ENCODE measurements at regions of chr11 and their contacts with region 1.

Region 1: DNA sequence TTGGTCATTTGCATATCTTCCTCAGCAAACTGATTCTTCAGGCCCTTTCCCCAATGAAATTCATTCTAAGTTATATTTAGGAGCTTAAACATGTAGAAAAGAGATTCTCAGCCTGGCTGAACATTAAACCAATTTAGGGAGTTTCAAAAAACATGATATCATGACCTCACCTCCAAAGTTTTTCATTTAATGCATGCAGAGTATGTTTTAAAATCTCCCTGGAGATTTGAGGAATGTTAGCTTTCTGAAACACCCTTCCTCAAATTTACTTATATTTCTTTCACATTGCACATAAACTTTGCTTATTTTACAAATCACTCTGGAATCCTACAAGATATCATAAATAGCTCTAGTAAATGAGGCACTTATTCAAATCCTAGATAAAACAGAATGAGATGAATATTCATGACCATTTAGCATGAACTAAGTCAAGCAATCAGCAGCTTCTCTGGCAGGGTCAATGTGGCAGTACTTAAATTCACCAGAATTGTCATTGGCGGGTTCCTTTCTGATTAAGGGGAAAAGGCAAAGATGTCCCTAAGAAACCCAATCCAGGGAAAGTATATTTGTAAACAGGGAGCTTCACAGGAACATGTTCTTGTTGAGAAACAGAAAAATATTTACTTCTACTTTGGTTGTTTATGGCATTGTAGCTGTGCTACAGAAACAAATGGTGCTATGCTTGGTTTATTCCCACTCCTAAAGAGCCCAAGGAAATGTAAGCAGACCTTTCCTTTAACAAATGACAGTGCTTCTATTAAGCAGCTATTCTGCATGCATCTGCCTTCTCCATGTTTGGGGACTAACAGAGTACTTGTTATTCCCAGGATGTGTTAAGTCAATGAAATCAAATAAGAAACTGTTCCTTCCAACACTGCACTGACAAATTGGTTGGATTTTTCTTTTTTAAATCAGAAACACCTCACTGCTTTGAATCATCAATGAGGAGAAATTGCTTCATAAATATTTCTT is 162.3 kb downstream of the C11orf87 start:
- DNase-seq: no peak
- H3K4me3 ChIP-seq: no peak overlapping the region
- H3K27ac ChIP-seq: no peak overlapping the region
- H3K4me1 ChIP-seq: no peaks in the 10 kb centered on the region
- H3K27me3 ChIP-seq: no peaks in the 10 kb centered on the region
- CTCF ChIP-seq: no peak

Region 2: DNA sequence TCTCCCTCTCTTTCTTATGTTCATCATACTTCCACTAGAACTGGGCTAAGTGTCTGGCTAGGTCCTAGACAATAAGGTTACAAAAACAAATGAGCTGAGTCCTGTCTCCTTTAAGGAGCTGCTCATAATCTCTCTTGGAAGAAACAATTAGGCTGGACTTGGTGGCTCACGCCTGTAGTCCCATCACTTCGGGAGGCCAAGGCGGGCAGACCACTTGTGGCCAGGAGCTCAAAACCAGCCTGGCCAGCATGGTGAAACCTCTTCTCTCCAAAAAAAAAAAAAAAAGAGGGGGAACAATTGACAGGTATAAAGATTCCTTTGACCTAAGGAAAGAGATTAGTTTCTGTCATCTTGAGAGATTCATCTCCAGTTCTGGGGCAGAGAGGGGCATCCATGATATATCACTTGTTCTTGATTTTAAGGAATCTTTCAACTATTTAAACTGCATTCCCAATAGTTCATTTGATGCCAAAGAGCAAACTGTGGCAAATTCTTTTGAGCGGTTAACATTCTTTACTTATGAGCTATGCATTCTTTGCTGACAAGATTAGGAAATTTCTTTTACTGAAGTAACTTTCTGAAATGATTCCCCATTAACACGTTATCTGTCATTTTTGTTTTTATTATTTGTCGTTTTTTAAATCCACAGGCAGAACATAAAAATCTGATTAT is 36.8 kb before region 1 on chr11:
- intact Hi-C with region 1: loop called (anchors 2 kb)
- DNase-seq: no peak
- H3K4me3 ChIP-seq: no peak overlapping the region
- H3K27ac ChIP-seq: no peak overlapping the region
- H3K4me1 ChIP-seq: no peaks in the 10 kb centered on the region
- H3K27me3 ChIP-seq: no peaks in the 10 kb centered on the region
- CTCF ChIP-seq: no peak